ENCODE measurements at regions of chr17 and their contacts with region 1.

Region 1: DNA sequence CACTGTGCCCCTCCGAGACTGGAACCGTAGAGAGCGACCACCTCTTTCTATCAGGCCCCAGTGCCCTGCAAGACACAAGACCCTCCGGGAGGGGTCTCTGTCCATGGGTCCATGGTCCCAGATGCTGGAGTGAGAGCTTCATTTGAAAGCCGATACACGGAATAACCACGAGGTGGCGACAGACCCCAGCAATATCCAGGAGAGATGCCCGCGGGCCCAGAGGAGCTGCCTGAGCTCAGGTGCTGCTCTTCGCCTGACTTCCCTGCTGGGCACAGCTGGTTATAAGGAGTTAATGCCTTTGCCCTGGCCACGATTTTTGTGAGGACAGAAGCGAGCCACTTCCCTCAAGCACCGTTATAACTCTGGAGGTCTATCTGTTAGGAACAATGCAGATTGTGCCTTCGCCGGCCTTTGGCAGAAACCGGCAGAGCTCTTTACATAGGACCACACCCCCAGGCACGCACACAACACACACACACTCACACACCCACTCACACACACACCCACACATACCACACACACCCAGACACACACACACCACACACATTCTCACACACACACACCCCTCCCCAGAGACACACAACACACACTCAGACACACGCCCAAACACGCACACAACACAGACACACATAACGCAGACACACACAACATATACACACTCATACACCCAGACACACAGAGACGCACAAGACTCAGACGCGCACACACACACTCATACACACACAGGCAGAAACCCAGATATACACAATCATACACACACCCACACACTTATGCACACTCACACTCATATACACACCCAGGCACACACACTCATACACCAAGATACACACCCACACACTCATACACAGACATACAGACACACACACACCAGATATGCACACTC is 436.4 kb downstream of the SOX9 start:
- DNase-seq: no peak
- H3K4me3 ChIP-seq: no peak overlapping the region
- H3K27me3 ChIP-seq: no peaks in the 10 kb centered on the region
- CTCF ChIP-seq: peak; percentile 84

Region 2: GRCh38 chr17:71885662-71886061 is 671.5 kb before region 1 on chr17:
- CTCF ChIA-PET with region 1: no interaction called
- POLR2A ChIA-PET with region 1: no interaction called
- DNase-seq: no peak
- H3K4me3 ChIP-seq: no peak overlapping the region
- H3K27me3 ChIP-seq: no peaks in the 10 kb centered on the region
- CTCF ChIP-seq: no peak

Region 3: GRCh38 chr17:72287586-72287985 is 269.6 kb before region 1 on chr17:
- CTCF ChIA-PET with region 1: no interaction called
- POLR2A ChIA-PET with region 1: no interaction called
- DNase-seq: no peak
- H3K4me3 ChIP-seq: no peak overlapping the region
- H3K27me3 ChIP-seq: no peaks in the 10 kb centered on the region; the same call in 1 of the 2 replicates
- CTCF ChIP-seq: no peak

Region 4: DNA sequence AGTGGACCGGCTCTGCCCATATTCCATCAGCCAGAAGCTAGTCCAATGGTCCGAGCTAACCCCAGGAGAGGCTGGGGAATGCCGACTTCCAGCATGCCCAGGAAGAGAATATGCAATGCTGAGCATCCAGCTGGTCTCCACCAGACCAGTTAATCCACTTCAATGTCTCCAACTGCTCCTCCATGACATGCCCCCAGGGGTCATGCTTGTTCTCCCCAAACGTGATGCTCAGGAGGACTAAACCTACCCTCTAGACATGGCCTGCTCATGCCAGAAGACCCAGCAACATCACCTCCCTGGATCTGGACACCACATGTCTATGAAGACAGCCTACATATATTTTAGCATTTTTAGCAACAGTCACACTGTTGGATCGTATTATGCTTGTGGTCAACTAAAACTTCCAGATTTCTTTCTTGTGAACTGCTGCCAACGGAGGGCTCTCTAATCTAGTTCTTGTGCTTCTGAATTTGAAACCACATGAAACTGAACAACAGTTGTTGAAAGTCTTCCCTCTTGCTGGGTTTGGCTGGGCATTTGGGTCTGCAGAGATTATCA is 191.2 kb before region 1 on chr17:
- CTCF ChIA-PET with region 1: no interaction called
- POLR2A ChIA-PET with region 1: no interaction called
- DNase-seq: peak; percentile 49
- H3K4me3 ChIP-seq: no peak overlapping the region
- H3K27me3 ChIP-seq: no peaks in the 10 kb centered on the region
- CTCF ChIP-seq: 0 out of 2 replicates have a peak, but pooled peaks have one; percentile 2

Region 5: DNA sequence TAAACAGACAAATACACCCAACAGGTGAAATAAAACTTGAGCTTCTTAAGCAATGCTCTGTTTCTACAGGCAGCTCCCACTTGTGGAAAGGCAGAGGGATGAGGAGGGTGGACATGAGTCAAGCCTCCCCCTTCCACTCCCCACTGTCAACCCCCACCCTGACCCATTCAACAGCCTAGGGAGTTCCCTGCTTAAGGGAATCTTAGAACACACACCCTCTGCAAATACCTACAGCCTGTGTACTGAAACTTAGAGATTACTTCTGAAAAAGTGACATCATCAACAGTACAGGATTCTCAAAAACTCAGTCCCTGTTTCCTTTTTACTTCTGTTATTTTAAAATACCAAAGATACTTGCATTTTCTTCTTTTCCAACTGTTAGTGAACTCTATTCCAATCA is 91.0 kb before region 1 on chr17:
- CTCF ChIA-PET with region 1: no interaction called
- POLR2A ChIA-PET with region 1: no interaction called
- DNase-seq: peak; percentile 51
- H3K4me3 ChIP-seq: no peak overlapping the region
- H3K27me3 ChIP-seq: no peaks in the 10 kb centered on the region
- CTCF ChIP-seq: 0 out of 2 replicates have a peak, but pooled peaks have one; percentile 20

Region 6: DNA sequence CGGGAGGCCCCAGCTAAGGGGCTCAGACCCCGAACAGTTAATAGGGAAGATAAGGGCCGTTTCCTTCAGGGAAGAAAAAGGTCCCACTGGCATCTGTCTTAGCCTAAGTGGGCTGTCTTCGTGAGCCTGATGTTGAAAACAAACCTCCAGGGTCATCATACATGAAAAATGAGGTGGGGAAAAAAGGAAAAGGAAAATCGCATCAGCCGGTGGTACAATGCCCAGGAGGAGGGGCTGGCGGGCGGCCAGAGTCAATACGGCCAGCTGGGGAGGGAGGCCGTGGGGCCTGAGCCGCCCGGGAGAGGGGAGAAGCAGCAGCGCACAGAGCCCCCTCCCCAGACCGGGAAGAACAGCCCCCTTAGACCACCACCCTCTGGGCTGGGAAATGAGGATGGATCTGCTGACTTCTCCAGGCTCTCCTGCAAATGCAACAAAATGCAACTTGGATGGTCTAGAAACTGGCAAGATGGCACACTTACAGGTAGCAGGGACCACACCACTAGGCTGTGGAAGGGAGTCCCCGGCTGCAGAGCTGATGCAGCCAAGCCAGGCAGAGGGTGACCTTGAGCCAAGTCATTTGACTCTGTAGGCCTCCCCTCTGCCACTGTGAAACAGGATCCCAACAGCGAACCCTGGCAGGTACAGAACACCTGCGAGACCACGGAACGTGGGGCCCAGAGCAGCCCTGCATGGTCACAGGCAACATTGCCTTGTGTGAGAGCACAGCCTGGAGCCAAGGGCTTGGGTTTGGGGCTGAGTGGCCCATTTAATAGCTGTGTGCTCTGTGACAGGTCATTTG is 12.2 kb after region 1 on chr17:
- CTCF ChIA-PET with region 1: interaction called, 47 read pairs
- POLR2A ChIA-PET with region 1: no interaction called
- DNase-seq: no peak
- H3K4me3 ChIP-seq: no peak overlapping the region
- H3K27me3 ChIP-seq: no peaks in the 10 kb centered on the region
- CTCF ChIP-seq: no peak

Region 7: GRCh38 chr17:72592242-72592966 is 35.2 kb after region 1 on chr17:
- CTCF ChIA-PET with region 1: interaction called, 18 read pairs
- POLR2A ChIA-PET with region 1: no interaction called
- DNase-seq: no peak
- H3K4me3 ChIP-seq: peak overlapping the region; percentile 83
- H3K27me3 ChIP-seq: no peaks in the 10 kb centered on the region
- CTCF ChIP-seq: no peak

Region 8: DNA sequence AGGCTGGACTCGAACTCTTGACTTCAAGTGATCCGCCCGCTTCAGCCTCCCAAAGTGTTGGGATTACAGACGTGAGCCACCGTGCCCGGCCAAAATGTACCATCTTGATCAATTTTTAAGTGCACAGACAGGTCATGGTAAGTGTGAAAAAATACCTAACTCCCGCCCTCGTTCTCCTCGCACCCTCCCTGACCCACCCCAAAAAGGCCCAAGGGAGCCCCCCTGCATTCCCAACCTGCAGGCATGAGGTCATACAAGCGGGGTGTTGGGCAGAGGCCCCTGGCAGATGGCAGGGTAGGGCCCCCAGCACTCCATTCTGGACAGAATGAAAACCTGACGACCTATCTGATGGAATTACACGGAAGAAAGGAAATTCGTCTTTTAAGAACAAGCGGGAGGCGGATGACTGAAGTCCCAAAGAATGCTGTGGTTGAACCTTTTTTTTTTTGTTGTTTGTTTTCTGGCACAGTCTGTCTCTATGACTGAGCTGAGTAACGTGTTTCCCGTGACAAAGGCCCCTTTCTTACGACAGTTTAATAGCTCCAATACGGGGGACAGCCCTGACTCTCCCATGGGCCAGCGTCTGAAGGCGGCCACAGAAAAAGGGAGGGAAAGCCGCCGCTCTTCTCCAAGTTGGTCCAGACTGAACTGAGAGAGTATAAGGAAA is 158.9 kb after region 1 on chr17:
- CTCF ChIA-PET with region 1: interaction called, 40 read pairs
- POLR2A ChIA-PET with region 1: no interaction called
- DNase-seq: peak; percentile 95
- H3K4me3 ChIP-seq: no peak overlapping the region
- H3K27me3 ChIP-seq: no peaks in the 10 kb centered on the region
- CTCF ChIP-seq: no peak

Region 9: GRCh38 chr17:72985881-72986720 is 428.9 kb after region 1 on chr17:
- CTCF ChIA-PET with region 1: interaction called, 10 read pairs
- POLR2A ChIA-PET with region 1: no interaction called
- DNase-seq: no peak
- H3K4me3 ChIP-seq: no peak overlapping the region
- H3K27me3 ChIP-seq: no peaks in the 10 kb centered on the region
- CTCF ChIP-seq: peak; percentile 86

Region 10: GRCh38 chr17:73166731-73167581 is 609.8 kb after region 1 on chr17:
- CTCF ChIA-PET with region 1: interaction called, 11 read pairs
- POLR2A ChIA-PET with region 1: no interaction called
- DNase-seq: no peak
- H3K4me3 ChIP-seq: no peak overlapping the region
- H3K27me3 ChIP-seq: peaks cover 46% of the 10 kb centered on the region
- CTCF ChIP-seq: no peak

Region 11: GRCh38 chr17:73247726-73248125 is 690.5 kb after region 1 on chr17:
- CTCF ChIA-PET with region 1: interaction called, 16 read pairs
- POLR2A ChIA-PET with region 1: no interaction called
- DNase-seq: no peak
- H3K4me3 ChIP-seq: no peak overlapping the region
- H3K27me3 ChIP-seq: no peaks in the 10 kb centered on the region; the same call in 1 of the 2 replicates
- CTCF ChIP-seq: peak; percentile 37